SK-N-SH (cell line): ENCODE measurements at regions of chr11 and their contacts with region 1.

Region 1: GRCh38 chr11:22875869-22876473 is 15.7 kb upstream of the CCDC179 start:
- DNase-seq: peak; percentile 50
- H3K4me3 ChIP-seq: peak overlapping the region in 1 of 2 experiments; percentile 48; a peak in 1 of 4 replicates
- H3K27ac ChIP-seq: no peak overlapping the region
- H3K4me1 ChIP-seq: no peaks in the 10 kb centered on the region
- H3K27me3 ChIP-seq: no peaks in the 10 kb centered on the region
- CTCF ChIP-seq: peak; percentile 92
- EP300 ChIP-seq: no peak
- RAD21 ChIP-seq: peak; percentile 89

Region 2: DNA sequence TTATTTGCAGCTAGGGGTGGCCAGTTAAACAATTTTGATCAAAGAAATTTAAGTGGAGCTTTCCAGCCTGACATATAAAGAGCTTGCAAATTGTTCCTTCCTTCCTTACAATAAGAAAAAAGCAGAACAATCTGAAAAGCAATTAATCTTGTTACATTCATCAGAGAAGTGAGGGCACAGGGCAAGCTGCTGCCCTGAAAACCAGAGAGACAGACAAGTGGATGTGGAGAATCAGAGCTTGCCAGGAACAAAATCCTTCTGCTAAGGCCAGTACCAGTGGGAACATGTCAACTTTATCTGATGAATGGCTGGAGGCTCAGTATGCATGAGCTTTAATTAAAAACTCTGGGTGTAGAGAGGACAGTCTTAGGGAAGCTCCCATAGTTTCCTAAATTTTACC is 24.5 kb before region 1 on chr11:
- CTCF ChIA-PET with region 1: interaction called, 19 read pairs
- POLR2A ChIA-PET with region 1: no interaction called
- DNase-seq: no peak
- H3K4me3 ChIP-seq: no peak overlapping the region
- H3K27ac ChIP-seq: no peak overlapping the region
- H3K4me1 ChIP-seq: no peaks in the 10 kb centered on the region
- H3K27me3 ChIP-seq: no peaks in the 10 kb centered on the region
- CTCF ChIP-seq: no peak
- EP300 ChIP-seq: no peak
- RAD21 ChIP-seq: no peak

Region 3: DNA sequence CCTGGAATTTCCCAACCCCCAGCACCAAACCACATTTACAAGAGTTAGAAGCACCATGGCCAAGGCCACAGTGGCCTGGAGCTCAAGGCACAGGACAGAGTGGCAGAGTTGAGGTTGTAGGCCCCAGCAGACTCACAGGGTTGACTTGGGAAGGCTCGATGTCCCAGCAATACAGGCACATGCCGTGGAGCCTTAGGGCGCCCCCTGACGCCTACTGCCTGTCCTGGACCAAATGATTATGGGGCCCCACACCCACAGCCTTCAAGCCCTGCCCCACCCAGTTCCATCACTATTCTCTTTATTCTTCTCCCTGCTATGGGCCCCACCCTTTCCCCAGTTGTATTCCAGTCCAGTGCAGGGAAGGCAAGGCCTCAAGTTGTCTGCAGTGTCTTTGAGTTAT is 15.7 kb before region 1 on chr11 and contains the start of gene CCDC179:
- CTCF ChIA-PET with region 1: interaction called, 28 read pairs
- POLR2A ChIA-PET with region 1: no interaction called
- DNase-seq: no peak
- H3K4me3 ChIP-seq: no peak within 1 kb of the TSS
- H3K27ac ChIP-seq: no peak within 1 kb of the TSS
- H3K4me1 ChIP-seq: no peaks in the 10 kb centered on the region
- H3K27me3 ChIP-seq: no peaks in the 10 kb centered on the region
- CTCF ChIP-seq: no peak
- EP300 ChIP-seq: no peak
- RAD21 ChIP-seq: no peak
- polyA plus RNA-seq, gene CCDC179: not detected in 2 replicates

Region 4: DNA sequence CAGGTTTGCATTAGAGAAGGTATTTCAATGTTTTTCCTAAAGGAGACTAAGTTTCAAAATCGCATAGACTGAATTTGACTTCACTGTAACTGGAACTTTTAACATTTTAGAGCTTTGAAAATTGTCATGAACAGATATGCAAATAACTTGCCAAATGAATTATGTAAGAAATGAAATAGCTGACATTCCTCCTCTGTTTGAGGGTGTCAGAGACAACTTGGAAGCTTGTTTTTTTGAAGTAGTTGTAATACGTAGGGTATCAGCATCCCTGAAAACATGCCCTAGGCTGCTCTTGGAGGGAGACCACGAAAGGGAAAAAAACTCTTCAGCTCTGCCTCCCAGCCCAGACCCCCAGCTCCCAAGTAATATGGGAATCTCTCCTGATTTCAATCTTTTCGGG is 25.6 kb after region 1 on chr11:
- CTCF ChIA-PET with region 1: interaction called, 10 read pairs
- POLR2A ChIA-PET with region 1: no interaction called
- DNase-seq: no peak
- H3K4me3 ChIP-seq: no peak overlapping the region
- H3K27ac ChIP-seq: no peak overlapping the region
- H3K4me1 ChIP-seq: no peaks in the 10 kb centered on the region
- H3K27me3 ChIP-seq: no peaks in the 10 kb centered on the region
- CTCF ChIP-seq: no peak
- EP300 ChIP-seq: no peak
- RAD21 ChIP-seq: no peak

Region 5: DNA sequence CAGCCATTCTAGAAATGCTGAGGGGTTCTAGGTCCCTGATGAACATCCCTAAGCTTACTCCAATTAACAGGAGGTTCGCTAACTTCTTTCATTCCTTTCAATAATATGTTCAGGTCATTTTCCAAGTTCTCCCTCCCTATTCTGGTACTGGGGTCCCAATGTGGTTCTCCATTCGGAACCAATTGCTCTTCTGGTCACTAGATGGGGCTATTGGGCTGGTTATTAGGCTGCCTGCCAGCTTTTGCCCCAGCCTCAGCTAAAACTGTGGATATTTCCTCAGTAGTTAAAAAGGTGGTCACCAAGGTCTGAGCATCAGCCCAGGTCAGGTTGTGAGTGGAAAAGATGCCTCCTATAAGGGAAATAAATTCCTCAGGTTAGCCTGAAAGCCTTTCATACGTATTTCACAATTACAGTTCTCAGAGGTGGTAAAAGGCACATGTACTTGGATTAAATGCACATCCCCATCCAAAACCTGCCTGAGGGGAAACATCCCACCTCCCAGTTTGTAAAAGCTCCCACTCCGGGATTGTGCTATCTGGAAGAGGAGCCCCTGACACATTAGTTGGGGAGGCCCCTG is 145.4 kb after region 1 on chr11:
- CTCF ChIA-PET with region 1: interaction called, 18 read pairs
- POLR2A ChIA-PET with region 1: no interaction called
- DNase-seq: peak; percentile 59
- H3K4me3 ChIP-seq: peak overlapping the region in 1 of 2 experiments; percentile 38; a peak in 1 of 4 replicates
- H3K27ac ChIP-seq: no peak overlapping the region
- H3K4me1 ChIP-seq: no peaks in the 10 kb centered on the region
- H3K27me3 ChIP-seq: no peaks in the 10 kb centered on the region
- CTCF ChIP-seq: peak; percentile 86
- EP300 ChIP-seq: no peak
- RAD21 ChIP-seq: peak; percentile 90